K562 (cell line): ENCODE measurements at regions of chr17 and their contacts with region 1.

Region 1: GRCh38 chr17:66906321-66907278 is 57.9 kb upstream of the CACNG4 start:
- DNase-seq: peak; percentile 68 to 80 (median 73)
- ATAC-seq: peak; percentile 76
- H3K4me3 ChIP-seq: no peak overlapping the region
- H3K27ac ChIP-seq: no peak overlapping the region
- H3K4me1 ChIP-seq: no peaks in the 10 kb centered on the region
- H3K27me3 ChIP-seq: peaks cover 39 to 67% of the 10 kb centered on the region in 2 experiments; a peak in 4 of 5 replicates
- CTCF ChIP-seq: peak; percentile 84 to 90 (median 88)
- EP300 ChIP-seq: no peak
- POLR2A ChIP-seq: no peak
- RAD21 ChIP-seq: peak; percentile 71 to 92

Region 2: DNA sequence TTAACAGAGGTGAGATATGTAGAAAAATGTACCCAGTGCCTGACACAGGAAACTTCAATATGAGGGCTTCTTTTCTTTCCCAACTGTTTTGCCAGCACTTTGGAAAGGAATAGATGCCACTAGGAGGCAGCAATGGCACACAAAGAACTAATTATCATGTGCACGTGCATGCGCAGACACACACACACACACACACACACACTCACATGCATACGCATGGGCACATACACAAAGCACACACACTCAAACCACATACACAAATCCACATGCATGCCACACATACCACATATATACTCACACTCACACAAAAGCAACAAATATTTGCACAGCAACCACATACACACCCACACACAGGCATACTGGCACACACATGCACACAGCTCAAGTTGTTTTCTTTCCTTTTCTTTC is 705.9 kb before region 1 on chr17:
- CTCF ChIA-PET with region 1: no interaction called
- POLR2A ChIA-PET with region 1: no interaction called
- in situ Hi-C with region 1: loop called (anchors 10 kb)
- intact Hi-C with region 1: loop called (anchors 2 kb)
- DNase-seq: peak; percentile 17 to 65 (median 30)
- ATAC-seq: peak; percentile 79
- H3K4me3 ChIP-seq: no peak overlapping the region
- H3K27ac ChIP-seq: no peak overlapping the region
- H3K4me1 ChIP-seq: no peaks in the 10 kb centered on the region
- H3K27me3 ChIP-seq: peaks cover 11 to 33% of the 10 kb centered on the region in 2 experiments; a peak in 4 of 5 replicates
- CTCF ChIP-seq: peak; percentile 60 to 78 (median 63); a peak in 5 of 6 replicates
- EP300 ChIP-seq: no peak
- POLR2A ChIP-seq: no peak
- RAD21 ChIP-seq: peak; percentile 61 to 84

Region 3: GRCh38 chr17:66255112-66255511 is 651.5 kb before region 1 on chr17:
- CTCF ChIA-PET with region 1: no interaction called
- POLR2A ChIA-PET with region 1: no interaction called
- in situ Hi-C with region 1: no loop called
- intact Hi-C with region 1: loop called (anchors 5 kb)
- DNase-seq: peak; percentile 52 to 80 (median 56)
- ATAC-seq: peak; percentile 94
- H3K4me3 ChIP-seq: no peak overlapping the region
- H3K27ac ChIP-seq: no peak overlapping the region
- H3K4me1 ChIP-seq: peaks cover 0 to 5% of the 10 kb centered on the region in 2 experiments; a peak in 1 of 5 replicates
- H3K27me3 ChIP-seq: no peaks in the 10 kb centered on the region
- CTCF ChIP-seq: peak; percentile 71 to 89 (median 74)
- EP300 ChIP-seq: no peak
- POLR2A ChIP-seq: no peak
- RAD21 ChIP-seq: peak; percentile 97 to 98

Region 4: DNA sequence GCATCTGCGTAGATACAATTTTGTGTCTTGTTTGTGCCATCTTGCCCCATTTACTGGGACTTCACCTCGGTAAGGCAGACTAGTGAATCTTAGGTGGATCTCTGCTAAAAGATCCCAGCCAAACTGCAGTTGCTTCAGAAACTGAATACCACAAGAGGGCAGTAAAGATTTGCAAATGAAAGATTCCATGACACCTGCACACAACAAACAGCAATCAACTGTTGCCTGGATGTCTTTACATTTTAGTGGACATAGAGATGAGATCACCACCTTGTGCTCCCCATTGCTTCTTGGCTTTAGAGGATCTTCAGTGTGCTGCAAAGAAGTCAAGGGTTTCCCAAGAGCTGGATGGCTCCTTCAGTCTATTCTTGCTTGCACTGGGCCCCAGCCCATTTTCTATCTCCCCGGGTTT is 190.8 kb before region 1 on chr17:
- CTCF ChIA-PET with region 1: interaction called, 18 read pairs
- POLR2A ChIA-PET with region 1: no interaction called
- in situ Hi-C with region 1: loop called (anchors 5 kb)
- intact Hi-C with region 1: loop called (anchors 1 kb)
- DNase-seq: peak in 2 of 4 experiments; percentile 56 to 62
- ATAC-seq: peak; percentile 80
- H3K4me3 ChIP-seq: no peak overlapping the region
- H3K27ac ChIP-seq: no peak overlapping the region
- H3K4me1 ChIP-seq: no peaks in the 10 kb centered on the region
- H3K27me3 ChIP-seq: no peaks in the 10 kb centered on the region
- CTCF ChIP-seq: peak; percentile 67 to 82 (median 73)
- EP300 ChIP-seq: no peak
- POLR2A ChIP-seq: no peak
- RAD21 ChIP-seq: peak; percentile 50 to 73

Region 5: DNA sequence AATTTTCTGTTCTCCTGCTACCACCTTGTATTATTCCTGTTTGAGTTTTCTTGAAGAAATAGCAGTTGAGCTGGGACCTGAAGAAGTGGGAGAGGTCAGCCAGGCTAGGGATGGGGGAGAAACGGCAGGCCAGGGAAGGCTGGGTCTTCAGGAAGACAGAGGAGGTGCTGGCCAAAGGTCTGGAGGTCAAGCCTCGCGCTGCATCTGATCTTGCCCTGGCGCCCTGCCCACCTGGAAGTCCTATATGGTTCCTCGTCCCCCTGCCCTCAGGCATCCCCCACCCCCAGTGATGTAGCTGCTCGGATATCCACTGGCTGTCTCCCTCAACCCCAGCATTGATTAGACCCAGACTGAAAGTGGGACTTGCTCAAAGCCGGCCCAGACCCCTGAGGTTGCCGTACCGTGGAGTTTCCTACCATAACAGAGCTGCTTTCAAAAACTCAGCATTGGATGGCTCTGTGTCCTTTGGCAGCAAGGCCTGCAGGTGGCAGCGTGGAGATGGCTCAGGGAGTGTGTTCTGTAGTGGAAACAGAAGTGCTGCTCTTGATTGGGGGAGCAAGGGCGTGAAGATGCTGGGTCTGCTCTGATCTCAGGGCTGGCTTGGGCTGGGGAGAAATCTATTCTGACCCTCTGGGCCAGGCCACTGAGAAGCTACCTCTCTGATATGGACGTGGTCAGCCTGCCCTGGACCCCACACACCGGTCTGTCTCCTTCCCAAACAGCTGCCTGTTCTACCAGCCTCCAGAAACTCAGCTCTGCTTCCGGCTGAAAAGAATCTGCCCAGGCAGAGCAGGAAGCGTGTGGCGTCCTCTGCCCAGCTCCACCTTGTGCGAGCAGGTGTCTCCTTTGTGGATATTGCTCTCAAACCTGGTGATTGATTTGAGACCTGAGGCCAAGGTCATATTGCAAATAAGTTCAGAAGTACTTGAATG is 178.7 kb before region 1 on chr17:
- CTCF ChIA-PET with region 1: interaction called, 5 read pairs
- POLR2A ChIA-PET with region 1: no interaction called
- in situ Hi-C with region 1: no loop called
- intact Hi-C with region 1: loop called (anchors 1 kb)
- DNase-seq: peak; percentile 45 to 57 (median 51)
- ATAC-seq: peak; percentile 96
- H3K4me3 ChIP-seq: no peak overlapping the region
- H3K27ac ChIP-seq: no peak overlapping the region
- H3K4me1 ChIP-seq: peaks cover 0 to 3% of the 10 kb centered on the region in 2 experiments; a peak in 2 of 5 replicates
- H3K27me3 ChIP-seq: no peaks in the 10 kb centered on the region
- CTCF ChIP-seq: peak; percentile 66 to 69 (median 66)
- EP300 ChIP-seq: no peak
- POLR2A ChIP-seq: no peak
- RAD21 ChIP-seq: peak in 1 of 2 experiments; percentile 56; a peak in 2 of 4 replicates